CD4-positive, alpha-beta T cell (primary cell): ENCODE measurements at regions of chr10 and their contacts with region 1.

Region 1: GRCh38 chr10:31770307-31770902 is 158.2 kb downstream of the ARHGAP12 start:
- DNase-seq: peak; percentile 43 to 76 (median 54)
- ATAC-seq: peak; percentile 97
- H3K4me3 ChIP-seq: no peak overlapping the region
- H3K4me3 Mint-ChIP-seq: no peak overlapping the region
- H3K27ac ChIP-seq: no peak overlapping the region
- H3K27ac Mint-ChIP-seq: no peak overlapping the region
- H3K4me1 ChIP-seq: no peaks in the 10 kb centered on the region
- H3K4me1 Mint-ChIP-seq: no peaks in the 10 kb centered on the region
- H3K27me3 ChIP-seq: no peaks in the 10 kb centered on the region
- H3K27me3 Mint-ChIP-seq: no peaks in the 10 kb centered on the region
- CTCF ChIP-seq: peak; percentile 89

Region 2: GRCh38 chr10:31745612-31746376 is 24.6 kb before region 1 on chr10:
- CTCF ChIA-PET with region 1: interaction called, 12 read pairs
- POLR2A ChIA-PET with region 1: no interaction called
- intact Hi-C with region 1: no loop called
- DNase-seq: peak in 7 of 14 experiments; percentile 14 to 51 (median 43)
- ATAC-seq: peak; percentile 87
- H3K4me3 ChIP-seq: no peak overlapping the region
- H3K4me3 Mint-ChIP-seq: no peak overlapping the region
- H3K27ac ChIP-seq: peak overlapping the region in 1 of 2 donors; percentile 12
- H3K27ac Mint-ChIP-seq: peak overlapping the region; percentile 13
- H3K4me1 ChIP-seq: peaks cover 12% of the 10 kb centered on the region
- H3K4me1 Mint-ChIP-seq: peaks cover 6% of the 10 kb centered on the region
- H3K27me3 ChIP-seq: no peaks in the 10 kb centered on the region
- H3K27me3 Mint-ChIP-seq: no peaks in the 10 kb centered on the region
- CTCF ChIP-seq: no peak